H1 (cell line): ENCODE measurements at regions of chr17 and their contacts with region 1.

Region 1: DNA sequence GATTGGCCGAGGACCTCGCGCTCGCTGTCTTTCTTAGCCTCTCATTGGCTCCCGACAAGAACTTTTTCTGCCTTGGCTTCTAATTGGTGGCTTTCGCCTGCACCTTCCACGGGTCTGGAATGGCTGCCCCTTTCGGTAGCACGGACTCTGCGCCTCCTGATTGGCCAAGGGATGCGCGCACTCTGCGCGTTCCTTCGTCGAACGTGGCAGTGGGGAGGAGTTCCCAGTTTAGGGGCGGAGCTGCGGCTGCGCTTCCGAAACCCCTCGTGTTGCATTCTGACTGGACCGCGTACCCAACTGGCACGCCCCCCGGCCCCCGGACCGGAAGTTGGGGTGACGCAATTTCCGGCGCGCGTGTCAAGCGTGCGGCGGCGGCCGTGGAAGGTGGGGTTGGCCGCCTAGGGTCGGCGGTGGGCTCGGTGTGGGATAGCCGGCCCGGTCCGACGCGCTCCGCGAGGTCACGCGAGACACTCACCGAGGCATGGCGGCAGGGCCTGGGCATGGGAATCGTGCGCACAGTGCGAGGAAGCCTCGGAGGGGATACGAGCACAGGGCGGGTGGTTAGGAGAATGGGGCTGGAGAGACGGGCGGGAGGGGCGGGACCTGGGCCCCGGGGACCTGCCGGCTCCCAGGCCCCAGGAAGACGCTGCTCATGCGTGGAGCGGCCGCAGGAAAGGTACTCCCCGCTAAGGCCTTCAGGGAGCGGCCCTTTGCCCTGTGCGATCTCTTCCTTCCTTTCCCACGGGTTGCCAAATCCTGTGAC is 602 bp upstream of the P4HB start:
- DNase-seq: peak; percentile 99 to 100
- H3K4me3 ChIP-seq: peak overlapping the region; percentile 79 to 95 (median 90)
- H3K27ac ChIP-seq: peak overlapping the region; percentile 69; the same call in 1 of the 2 replicates
- H3K4me1 ChIP-seq: peaks cover 0 to 5% (median 5%) of the 10 kb centered on the region in 4 experiments; a peak in 5 of 7 replicates
- H3K27me3 ChIP-seq: no peaks in the 10 kb centered on the region
- CTCF ChIP-seq: no peak
- EP300 ChIP-seq: no peak
- POLR2A ChIP-seq: peak; percentile 52 to 69; a peak in 2 of 3 replicates
- RAD21 ChIP-seq: no peak

Region 2: GRCh38 chr17:81879121-81879520 is 18.2 kb after region 1 on chr17:
- CTCF ChIA-PET with region 1: no interaction called
- POLR2A ChIA-PET with region 1: interaction called, 21 read pairs
- DNase-seq: no peak
- H3K4me3 ChIP-seq: no peak overlapping the region
- H3K27ac ChIP-seq: no peak overlapping the region
- H3K4me1 ChIP-seq: no peaks in the 10 kb centered on the region
- H3K27me3 ChIP-seq: no peaks in the 10 kb centered on the region
- CTCF ChIP-seq: no peak
- EP300 ChIP-seq: no peak
- POLR2A ChIP-seq: no peak
- RAD21 ChIP-seq: no peak

Region 3: GRCh38 chr17:82013341-82013740 is 152.4 kb after region 1 on chr17:
- CTCF ChIA-PET with region 1: no interaction called
- POLR2A ChIA-PET with region 1: no interaction called
- DNase-seq: no peak
- H3K4me3 ChIP-seq: no peak overlapping the region
- H3K27ac ChIP-seq: no peak overlapping the region
- H3K4me1 ChIP-seq: no peaks in the 10 kb centered on the region; a peak in 1 of 7 replicates
- H3K27me3 ChIP-seq: no peaks in the 10 kb centered on the region
- CTCF ChIP-seq: no peak
- EP300 ChIP-seq: no peak
- POLR2A ChIP-seq: no peak
- RAD21 ChIP-seq: no peak